ENCODE measurements at regions of chr20 and their contacts with region 1.

Region 1: DNA sequence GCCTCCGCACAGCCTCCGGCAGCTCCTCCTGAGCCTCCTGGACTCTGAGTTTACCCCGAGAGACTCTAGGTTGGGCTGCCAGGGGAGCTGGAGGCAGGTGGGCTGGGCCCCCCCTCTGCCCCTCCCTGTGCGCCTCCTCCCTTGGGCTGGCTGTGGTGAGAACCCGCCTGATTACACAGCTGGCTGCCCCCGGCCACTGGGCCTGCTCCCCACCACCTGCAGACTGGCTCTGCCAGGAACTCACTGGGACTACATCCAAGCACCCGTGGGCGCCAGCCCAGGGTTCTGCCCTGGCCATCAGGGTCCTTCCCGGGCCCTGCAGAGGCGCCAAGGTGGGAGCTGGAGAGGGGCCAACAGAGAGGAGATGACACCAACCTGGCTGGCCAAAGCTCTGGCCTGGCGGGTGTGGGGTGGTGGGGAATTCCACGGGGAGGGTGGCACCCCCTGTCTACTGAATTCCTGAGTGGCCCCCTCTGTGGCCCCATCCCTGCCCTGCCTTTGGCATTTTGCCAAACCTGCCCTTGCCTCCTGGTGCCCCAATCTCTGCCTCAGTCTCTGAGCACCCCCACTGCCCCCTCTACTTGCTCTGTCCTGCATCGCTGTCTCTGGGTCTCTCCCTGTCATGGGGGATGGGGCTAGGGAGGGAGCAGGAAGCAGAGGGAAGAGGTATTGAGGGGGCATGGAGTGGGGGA is 21.9 kb upstream of the CDH22 start:
- DNase-seq: peak; percentile 55
- H3K4me3 ChIP-seq: no peak overlapping the region
- H3K27ac ChIP-seq: peak overlapping the region in 1 of 2 experiments; percentile 43; a peak in 2 of 4 replicates
- H3K4me1 ChIP-seq: peaks cover 0 to 67% of the 10 kb centered on the region in 2 experiments; a peak in 2 of 4 replicates
- H3K27me3 ChIP-seq: 0 out of 2 replicates have a peak, but pooled peaks cover 8% of the 10 kb centered on the region
- CTCF ChIP-seq: no peak
- EP300 ChIP-seq: peak in 1 of 2 experiments; percentile 36; a peak in 1 of 4 replicates
- RAD21 ChIP-seq: no peak

Region 2: DNA sequence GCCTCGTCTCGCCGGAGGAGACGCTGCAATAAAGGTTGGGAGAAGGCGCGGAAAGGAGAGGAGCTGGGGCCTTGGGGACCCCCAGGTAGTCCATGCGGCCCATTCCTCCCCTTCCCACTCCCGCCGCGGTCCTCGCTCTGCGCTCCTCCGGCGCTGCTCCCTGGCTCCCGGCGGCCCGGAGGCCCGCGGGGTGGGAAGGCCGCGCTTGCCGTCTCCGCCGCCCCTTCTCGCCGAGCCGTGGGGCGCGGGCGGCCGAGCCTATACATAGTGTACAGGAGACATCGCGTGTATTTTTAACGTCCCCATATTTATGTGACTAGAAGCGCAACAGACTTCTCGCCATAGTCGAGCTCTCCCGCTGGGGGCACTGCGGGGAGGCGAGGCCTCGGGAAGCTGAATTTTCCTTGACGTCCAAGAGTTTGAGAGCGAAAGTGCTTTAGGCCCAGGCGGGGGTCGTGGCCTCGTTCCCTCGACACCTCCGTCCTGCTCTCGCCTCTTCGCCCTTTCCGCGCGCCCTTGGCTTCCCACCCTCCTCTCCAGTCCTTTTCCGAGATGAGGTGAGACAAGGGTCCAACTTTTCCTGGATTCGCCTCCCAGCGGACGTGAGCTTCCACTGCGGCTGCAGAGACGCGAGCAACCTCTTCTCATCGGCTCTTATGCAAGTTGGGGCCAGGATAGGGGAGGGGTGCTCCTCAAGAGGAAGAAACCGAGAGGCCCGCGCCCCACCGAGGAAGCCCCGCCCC is 272.2 kb before region 1 on chr20:
- CTCF ChIA-PET with region 1: no interaction called
- POLR2A ChIA-PET with region 1: no interaction called
- DNase-seq: no peak
- H3K4me3 ChIP-seq: no peak overlapping the region; a peak in 1 of 4 replicates
- H3K27ac ChIP-seq: no peak overlapping the region
- H3K4me1 ChIP-seq: peaks cover 5 to 10% of the 10 kb centered on the region in 2 experiments; a peak in 2 of 4 replicates
- H3K27me3 ChIP-seq: no peaks in the 10 kb centered on the region
- CTCF ChIP-seq: no peak
- EP300 ChIP-seq: no peak
- RAD21 ChIP-seq: no peak

Region 3: DNA sequence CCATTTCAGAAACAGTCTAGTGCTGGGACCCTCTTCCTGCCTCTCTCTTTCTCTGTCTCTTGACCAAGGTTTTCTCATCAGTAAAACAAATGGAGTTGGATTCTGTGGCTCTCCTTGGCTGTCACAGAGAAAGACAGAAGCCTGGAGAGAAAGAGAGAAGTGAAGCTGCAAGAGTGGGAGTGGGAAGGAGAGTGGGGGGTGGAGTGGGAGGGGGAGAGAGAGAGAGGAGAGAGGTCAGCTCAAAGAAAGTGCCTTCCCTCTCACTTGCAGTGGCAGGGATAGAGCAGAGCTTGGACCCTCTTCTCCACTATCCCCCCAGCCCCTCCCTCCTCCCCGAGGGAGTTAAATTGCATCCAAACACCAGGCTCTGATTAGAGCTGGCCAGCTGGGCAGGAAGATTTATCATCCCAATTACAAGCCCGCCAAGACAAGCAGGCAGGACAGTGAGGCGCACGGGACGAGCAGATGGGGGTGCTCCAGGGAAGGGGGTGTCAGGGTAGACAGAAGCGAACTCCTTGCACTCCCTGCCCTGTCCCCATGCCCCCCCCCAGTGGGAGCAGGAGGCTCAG is 137.8 kb before region 1 on chr20:
- CTCF ChIA-PET with region 1: no interaction called
- POLR2A ChIA-PET with region 1: no interaction called
- DNase-seq: peak; percentile 89
- H3K4me3 ChIP-seq: no peak overlapping the region
- H3K27ac ChIP-seq: peak overlapping the region in 1 of 2 experiments; percentile 31; a peak in 1 of 4 replicates
- H3K4me1 ChIP-seq: peaks cover 0 to 37% of the 10 kb centered on the region in 2 experiments; a peak in 1 of 4 replicates
- H3K27me3 ChIP-seq: 0 out of 2 replicates have a peak, but pooled peaks cover 4% of the 10 kb centered on the region
- CTCF ChIP-seq: no peak
- EP300 ChIP-seq: peak in 1 of 2 experiments; percentile 67; a peak in 2 of 4 replicates
- RAD21 ChIP-seq: no peak; the same call in 1 of the 2 replicates

Region 4: DNA sequence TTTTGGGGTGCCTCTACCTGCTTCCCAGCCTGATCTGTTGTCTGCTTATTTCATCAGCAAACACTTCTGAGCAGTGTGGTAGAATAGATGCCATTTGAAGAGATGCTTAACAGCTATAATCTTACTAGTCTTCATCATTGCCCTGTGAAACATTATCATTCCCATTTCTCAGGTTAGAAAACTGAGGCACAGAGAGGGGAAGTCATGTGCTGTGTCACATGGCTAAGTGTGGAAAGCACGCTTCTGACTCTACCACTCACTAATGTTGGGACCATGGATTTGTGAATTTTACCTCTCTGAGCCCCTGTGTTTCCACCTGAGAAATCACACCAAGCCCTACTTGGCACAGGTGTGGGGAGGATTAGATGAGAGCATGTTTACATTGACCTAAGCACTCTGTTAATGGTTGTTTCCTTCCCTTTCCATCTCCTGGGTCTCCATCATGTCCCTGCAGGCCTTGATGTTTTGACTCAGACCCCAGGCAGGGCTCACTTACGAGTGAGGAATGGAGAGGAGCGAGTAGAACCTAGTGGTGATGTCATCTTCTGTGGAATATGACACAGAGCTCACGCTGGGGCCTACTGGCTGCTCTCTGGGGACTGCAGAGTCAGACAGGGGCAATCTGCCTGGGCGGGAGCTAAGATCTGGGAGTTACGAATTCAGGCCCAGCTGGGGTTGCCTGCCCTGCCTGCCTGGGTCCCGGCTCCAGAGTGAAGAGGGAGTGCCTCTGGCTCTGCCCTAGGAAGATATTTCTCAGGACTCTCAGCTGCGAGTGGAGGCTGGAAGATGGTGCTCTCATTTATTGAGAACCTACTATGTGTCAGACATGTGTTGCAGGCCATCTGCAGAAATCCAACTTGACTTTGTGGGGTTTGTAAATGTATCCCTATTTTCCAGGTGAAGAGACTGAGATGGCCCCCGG is 86.2 kb before region 1 on chr20:
- CTCF ChIA-PET with region 1: no interaction called
- POLR2A ChIA-PET with region 1: no interaction called
- DNase-seq: no peak
- H3K4me3 ChIP-seq: no peak overlapping the region
- H3K27ac ChIP-seq: no peak overlapping the region
- H3K4me1 ChIP-seq: no peaks in the 10 kb centered on the region; a peak in 1 of 4 replicates
- H3K27me3 ChIP-seq: no peaks in the 10 kb centered on the region
- CTCF ChIP-seq: no peak
- EP300 ChIP-seq: no peak
- RAD21 ChIP-seq: no peak

Region 5: DNA sequence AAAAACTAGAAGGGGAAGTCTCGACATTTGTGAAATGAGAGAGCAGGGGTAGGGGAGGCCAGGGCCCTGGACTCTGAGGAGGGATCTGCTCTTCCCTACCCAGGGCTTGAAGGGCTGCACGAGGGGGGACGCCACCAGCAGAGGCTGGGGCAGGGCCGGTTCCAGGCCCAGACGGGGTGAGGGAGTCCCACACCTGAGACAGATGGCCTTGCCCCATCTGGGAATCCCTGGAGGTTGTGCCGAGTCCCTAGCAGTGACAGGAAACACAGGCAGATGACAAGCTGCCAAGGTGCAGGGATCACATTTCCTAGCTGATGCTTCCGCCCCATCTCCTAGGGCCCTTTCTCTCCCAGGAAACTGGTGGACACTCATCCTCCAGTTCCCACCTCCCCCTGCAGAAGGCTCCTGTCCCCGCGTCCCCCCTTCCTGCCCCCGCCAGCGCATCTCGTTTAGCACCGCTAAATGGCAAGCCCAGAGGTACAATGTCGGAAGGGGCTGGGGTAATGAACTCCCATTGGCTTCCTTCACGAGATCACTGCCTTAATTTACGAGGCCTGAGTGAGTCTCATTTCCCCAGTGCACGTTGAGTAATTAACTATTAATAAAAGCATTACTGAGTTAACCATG is 13.2 kb after region 1 on chr20:
- CTCF ChIA-PET with region 1: interaction called, 54 read pairs
- POLR2A ChIA-PET with region 1: interaction called, 5 read pairs
- DNase-seq: no peak
- H3K4me3 ChIP-seq: no peak overlapping the region
- H3K27ac ChIP-seq: no peak overlapping the region
- H3K4me1 ChIP-seq: peaks cover 0 to 37% of the 10 kb centered on the region in 2 experiments; a peak in 1 of 4 replicates
- H3K27me3 ChIP-seq: no peaks in the 10 kb centered on the region
- CTCF ChIP-seq: no peak
- EP300 ChIP-seq: no peak
- RAD21 ChIP-seq: no peak

Region 6: DNA sequence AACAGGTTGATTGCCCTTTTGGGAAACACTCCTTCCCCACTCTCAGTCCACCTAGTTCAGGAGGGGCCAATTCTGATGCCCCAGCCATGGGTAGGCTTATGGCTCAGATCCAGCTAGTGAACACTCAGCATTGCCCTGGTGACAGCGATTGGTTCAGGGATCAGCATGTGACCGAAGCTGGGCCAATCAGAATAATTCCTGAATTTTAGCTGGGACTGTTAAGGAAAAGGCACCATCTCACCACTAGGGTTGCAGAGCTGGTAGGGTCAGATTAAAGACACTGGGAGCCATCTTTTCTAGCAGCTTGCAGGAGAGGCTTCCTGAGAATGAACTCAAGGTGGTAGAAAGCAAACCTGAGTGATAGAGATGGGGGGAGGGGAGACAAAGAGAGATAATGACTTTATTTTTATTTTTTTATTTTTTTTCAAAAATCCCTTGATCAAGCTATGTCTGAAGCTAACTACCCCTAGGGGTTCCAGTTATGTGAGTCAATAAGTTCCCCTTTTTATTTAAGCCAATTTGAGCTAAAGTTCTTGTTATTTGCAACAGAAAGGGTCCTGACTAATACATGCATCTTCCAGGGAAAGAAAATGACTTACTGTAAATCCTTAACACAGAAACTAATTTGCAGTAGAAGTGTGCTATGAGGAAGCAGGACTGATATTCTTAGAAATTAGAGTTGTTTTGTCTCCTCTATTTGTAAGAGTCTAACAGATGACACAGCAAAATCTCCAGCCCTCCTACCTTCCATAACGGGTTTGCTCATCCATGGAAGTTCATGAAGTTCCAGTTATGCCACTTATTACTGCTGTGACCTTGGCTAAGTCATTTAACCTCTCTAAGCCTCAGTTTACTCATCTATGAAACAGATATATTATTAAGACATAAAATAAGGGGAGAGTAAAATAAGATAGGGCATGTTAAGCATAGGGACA is 609.1 kb after region 1 on chr20:
- CTCF ChIA-PET with region 1: no interaction called
- POLR2A ChIA-PET with region 1: no interaction called
- DNase-seq: peak; percentile 50
- H3K4me3 ChIP-seq: no peak overlapping the region
- H3K27ac ChIP-seq: no peak overlapping the region
- H3K4me1 ChIP-seq: no peaks in the 10 kb centered on the region
- H3K27me3 ChIP-seq: no peaks in the 10 kb centered on the region; the same call in 1 of the 2 replicates
- CTCF ChIP-seq: peak; percentile 37; the same call in 1 of the 2 replicates
- EP300 ChIP-seq: no peak
- RAD21 ChIP-seq: no peak